ENCODE measurements at regions of chr11 and their contacts with region 1.

Region 1: GRCh38 chr11:45771566-45772448 is 33.1 kb upstream of the SLC35C1 start:
- DNase-seq: peak; percentile 94
- CTCF ChIP-seq: peak; percentile 91

Region 2: DNA sequence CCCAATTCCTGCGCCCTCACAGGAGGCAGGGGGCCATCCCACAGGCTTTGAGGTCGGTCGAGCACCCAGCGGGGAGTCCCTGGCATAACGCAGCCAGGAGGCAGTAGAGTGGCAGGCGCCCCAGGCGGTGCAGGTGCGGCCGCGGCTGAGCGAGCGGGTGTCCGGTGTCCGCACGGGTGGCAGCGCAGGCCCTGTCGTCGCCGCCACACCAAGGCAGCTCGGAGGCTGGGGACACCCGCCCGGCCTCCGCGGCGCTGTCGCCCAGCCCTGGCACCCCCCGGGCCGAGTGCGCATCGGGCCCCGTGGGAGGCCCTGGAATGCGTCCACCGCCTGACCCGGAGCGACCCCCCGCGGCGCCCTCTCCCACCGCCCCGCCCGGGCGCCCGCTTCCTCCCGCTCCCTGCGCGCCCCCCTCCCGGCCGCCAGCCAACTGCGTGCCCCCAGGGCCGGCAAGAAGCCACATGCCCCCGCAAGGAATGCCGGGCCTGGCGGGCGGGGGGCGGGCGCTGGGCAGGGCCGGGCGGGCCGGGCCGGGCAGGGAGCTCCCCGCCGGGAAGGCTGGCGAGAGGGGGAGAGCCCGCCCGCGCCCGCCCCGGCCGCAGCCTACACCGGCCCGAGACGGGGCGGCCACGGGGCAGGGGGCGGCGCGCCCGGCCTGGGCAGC is 591.5 kb before region 1 on chr11:
- in situ Hi-C with region 1: no loop called
- DNase-seq: no peak
- CTCF ChIP-seq: no peak

Region 3: DNA sequence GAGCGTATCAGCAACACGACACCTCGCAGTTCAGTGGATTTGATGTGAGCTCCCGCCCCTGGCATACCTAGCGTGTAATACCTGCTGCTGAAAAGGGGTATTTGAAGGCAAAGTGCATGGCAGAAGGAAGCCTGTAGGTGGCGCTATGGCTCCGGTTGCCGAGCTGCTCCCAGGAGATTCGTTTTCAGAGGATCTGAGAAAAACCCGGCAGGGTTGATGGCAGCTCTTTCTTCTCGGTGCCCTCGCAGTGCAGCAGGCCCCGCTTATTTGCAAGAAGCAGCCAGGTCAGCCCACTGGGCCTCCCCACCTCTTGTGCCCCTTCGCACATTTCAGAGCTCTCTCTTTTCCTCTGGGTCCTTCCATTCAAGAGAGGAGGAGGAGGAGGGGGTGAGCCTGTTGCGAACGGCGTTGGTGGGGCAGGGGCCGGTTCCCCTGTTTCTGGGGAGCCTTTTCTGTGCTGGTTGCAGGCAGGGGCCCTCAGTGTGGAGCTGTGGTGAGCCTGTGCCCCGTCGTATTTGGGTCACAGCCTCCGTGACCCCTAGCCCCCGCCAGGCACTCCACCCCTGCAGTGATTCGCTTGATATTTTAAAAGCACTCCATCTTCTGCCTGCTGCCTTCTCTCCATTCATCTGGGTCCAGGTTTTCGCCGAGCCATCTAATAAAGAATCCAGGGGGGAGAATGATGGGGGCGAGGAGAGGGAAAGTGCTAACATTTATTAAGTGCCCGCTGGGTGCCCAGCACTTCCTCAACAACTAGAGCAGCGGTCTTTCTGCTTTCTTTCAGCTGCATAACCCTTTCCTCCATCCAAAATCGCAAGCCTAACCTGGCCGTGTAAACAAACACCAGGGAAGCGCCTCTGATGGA is 400.3 kb before region 1 on chr11:
- in situ Hi-C with region 1: loop called (anchors 25 kb)
- DNase-seq: peak; percentile 84
- CTCF ChIP-seq: peak; percentile 83

Region 4: DNA sequence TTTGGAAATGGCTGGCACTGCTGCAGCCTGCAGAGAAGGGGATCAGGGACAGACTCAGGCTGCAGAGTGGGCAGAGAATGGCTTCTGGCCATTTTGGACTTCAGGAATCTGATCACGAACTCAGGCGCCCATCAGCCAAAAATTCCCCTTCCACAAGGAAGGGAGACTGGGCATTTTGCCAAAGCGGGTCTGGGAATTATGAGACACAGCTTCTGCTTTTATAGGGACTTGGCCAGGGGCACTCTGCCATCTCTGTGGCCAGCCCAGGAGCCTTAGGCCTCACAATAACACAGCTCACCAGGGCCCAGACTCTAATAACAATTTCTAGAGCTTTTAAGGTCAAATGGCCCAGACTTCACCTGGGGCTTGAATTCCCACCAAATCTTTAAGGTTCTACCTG is 181.1 kb before region 1 on chr11:
- in situ Hi-C with region 1: no loop called
- DNase-seq: no peak
- CTCF ChIP-seq: no peak

Region 5: DNA sequence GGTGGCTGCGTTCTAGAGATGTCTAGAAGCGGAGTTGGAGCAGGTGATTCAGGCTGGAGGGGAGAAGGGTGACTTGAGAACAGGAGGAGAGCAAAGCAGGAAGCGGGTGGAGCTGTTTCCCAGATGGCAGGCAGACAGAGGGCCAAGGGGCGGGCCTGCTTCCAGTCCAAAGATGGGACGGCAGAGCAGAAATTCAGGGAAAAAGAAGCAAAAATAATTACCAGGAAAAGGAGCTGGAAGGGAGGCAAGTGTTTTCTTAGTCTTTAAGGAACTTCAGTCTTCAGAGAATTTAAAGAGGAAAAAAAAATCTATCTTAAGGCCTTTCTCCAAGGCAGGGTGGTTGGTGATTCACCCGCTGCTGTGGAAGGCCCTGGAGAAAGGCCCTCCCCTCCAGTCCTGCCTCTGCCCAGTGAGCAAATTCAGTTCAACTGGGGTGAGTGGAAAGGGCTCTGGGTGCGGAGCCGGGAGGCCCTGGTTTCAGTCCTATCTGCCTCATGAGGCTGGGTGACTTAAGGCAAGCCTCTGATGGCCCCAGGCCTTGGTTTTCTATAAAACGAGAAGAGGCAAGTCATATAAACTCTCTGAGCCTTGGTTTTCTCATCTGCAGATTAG is 501.1 kb after region 1 on chr11:
- in situ Hi-C with region 1: no loop called
- DNase-seq: no peak
- CTCF ChIP-seq: no peak